ENCODE measurements at regions of chr5 and their contacts with region 1.

Region 1: GRCh38 chr5:80804332-80804731 is 149.5 kb upstream of the DHFR start:
- DNase-seq: no peak
- H3K4me3 ChIP-seq: no peak overlapping the region
- H3K27ac ChIP-seq: no peak overlapping the region
- H3K4me1 ChIP-seq: no peaks in the 10 kb centered on the region
- H3K27me3 ChIP-seq: no peaks in the 10 kb centered on the region
- CTCF ChIP-seq: no peak
- POLR2A ChIP-seq: no peak

Region 2: GRCh38 chr5:80654054-80654390 is 150.3 kb before region 1 on chr5:
- CTCF ChIA-PET with region 1: no interaction called
- POLR2A ChIA-PET with region 1: no interaction called
- dilution Hi-C with region 1: no loop called
- intact Hi-C with region 1: no loop called
- DNase-seq: peak; percentile 13
- H3K4me3 ChIP-seq: peak overlapping the region; percentile 63 to 91 (median 76)
- H3K27ac ChIP-seq: peak overlapping the region; percentile 23
- H3K4me1 ChIP-seq: peaks cover 20% of the 10 kb centered on the region
- H3K27me3 ChIP-seq: no peaks in the 10 kb centered on the region
- CTCF ChIP-seq: no peak
- POLR2A ChIP-seq: no peak

Region 3: DNA sequence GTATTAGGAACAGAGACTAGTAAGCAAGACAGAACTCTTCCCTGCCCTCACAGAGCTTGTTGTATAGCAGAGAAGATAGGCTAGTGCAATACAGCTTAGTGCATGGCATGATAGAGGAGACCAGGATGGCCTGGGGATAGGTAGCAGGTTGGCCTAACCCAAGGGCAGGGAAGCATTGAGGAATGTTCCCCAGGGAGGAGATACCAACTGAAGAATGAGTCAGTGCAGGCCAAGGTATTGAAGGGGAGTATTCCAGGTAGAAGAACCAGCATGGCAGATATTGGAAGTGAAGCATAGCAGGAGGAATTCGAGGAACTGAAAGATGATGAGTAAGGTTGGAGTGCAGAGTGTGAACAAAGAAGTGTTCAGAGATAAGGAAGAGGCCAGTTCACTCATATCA is 11.0 kb before region 1 on chr5:
- CTCF ChIA-PET with region 1: no interaction called
- POLR2A ChIA-PET with region 1: no interaction called
- dilution Hi-C with region 1: no loop called
- intact Hi-C with region 1: no loop called
- DNase-seq: no peak
- H3K4me3 ChIP-seq: no peak overlapping the region
- H3K27ac ChIP-seq: no peak overlapping the region
- H3K4me1 ChIP-seq: no peaks in the 10 kb centered on the region
- H3K27me3 ChIP-seq: no peaks in the 10 kb centered on the region
- CTCF ChIP-seq: no peak
- POLR2A ChIP-seq: no peak

Region 4: GRCh38 chr5:80852331-80853245 is 48.3 kb after region 1 on chr5:
- CTCF ChIA-PET with region 1: no interaction called
- POLR2A ChIA-PET with region 1: no interaction called
- dilution Hi-C with region 1: no loop called
- intact Hi-C with region 1: no loop called
- DNase-seq: no peak
- H3K4me3 ChIP-seq: no peak overlapping the region
- H3K27ac ChIP-seq: no peak overlapping the region
- H3K4me1 ChIP-seq: no peaks in the 10 kb centered on the region
- H3K27me3 ChIP-seq: no peaks in the 10 kb centered on the region
- CTCF ChIP-seq: no peak
- POLR2A ChIP-seq: no peak

Region 5: GRCh38 chr5:81006947-81007636 is 202.8 kb after region 1 on chr5:
- CTCF ChIA-PET with region 1: no interaction called
- POLR2A ChIA-PET with region 1: no interaction called
- dilution Hi-C with region 1: loop called (anchors 25 kb)
- intact Hi-C with region 1: no loop called
- DNase-seq: no peak
- H3K4me3 ChIP-seq: no peak overlapping the region
- H3K27ac ChIP-seq: no peak overlapping the region
- H3K4me1 ChIP-seq: no peaks in the 10 kb centered on the region
- H3K27me3 ChIP-seq: peaks cover 0 to 3% of the 10 kb centered on the region in 2 experiments
- CTCF ChIP-seq: no peak
- POLR2A ChIP-seq: no peak

Measured in endothelial cell of umbilical vein (primary cell).